PC-9 (cell line): ENCODE measurements at regions of chr5 and their contacts with region 1.

Region 1: GRCh38 chr5:132103332-132103951 is 29.9 kb downstream of the CSF2 start:
- DNase-seq: peak; percentile 86 to 93
- H3K4me3 ChIP-seq: no peak overlapping the region
- H3K27ac ChIP-seq: peak overlapping the region; percentile 88
- H3K4me1 ChIP-seq: peaks cover 60% of the 10 kb centered on the region
- H3K27me3 ChIP-seq: no peaks in the 10 kb centered on the region
- CTCF ChIP-seq: 0 out of 2 replicates have a peak, but pooled peaks have one; percentile 22

Region 2: DNA sequence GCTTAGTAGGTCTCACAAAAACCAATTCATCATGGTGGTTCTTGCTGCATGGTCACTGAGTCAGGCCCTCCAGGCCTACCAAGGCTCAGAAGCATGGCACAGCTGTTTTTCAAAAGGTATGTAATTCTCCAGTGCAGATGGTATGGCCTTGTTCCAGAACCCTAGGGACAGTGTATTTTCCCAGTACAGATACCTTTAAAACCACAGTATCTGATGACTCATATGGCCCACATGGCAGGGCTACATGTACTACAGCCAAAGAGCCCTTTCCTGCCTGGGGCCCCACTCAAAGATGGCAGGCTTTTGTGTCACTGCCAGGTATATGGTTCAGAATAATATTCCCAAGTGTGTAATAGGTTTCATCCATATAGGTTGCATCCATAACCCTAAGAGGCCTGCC is 13.3 kb before region 1 on chr5:
- CTCF ChIA-PET with region 1: no interaction called
- POLR2A ChIA-PET with region 1: no interaction called
- intact Hi-C with region 1: loop called (anchors 1 kb)
- DNase-seq: peak; percentile 62 to 77
- H3K4me3 ChIP-seq: no peak overlapping the region
- H3K27ac ChIP-seq: no peak overlapping the region
- H3K4me1 ChIP-seq: peaks cover 45% of the 10 kb centered on the region
- H3K27me3 ChIP-seq: no peaks in the 10 kb centered on the region
- CTCF ChIP-seq: no peak